ENCODE measurements at regions of chr9 and their contacts with region 1.

Region 1: GRCh38 chr9:78630966-78631365 is 334.0 kb downstream of the PSAT1 start:
- DNase-seq: no peak
- ATAC-seq: no peak
- H3K4me3 ChIP-seq: no peak overlapping the region
- H3K27ac ChIP-seq: no peak overlapping the region
- H3K4me1 ChIP-seq: no peaks in the 10 kb centered on the region
- H3K27me3 ChIP-seq: peaks cover 0 to 6% (median 3%) of the 10 kb centered on the region in 7 donors
- CTCF ChIP-seq: no peak

Region 2: DNA sequence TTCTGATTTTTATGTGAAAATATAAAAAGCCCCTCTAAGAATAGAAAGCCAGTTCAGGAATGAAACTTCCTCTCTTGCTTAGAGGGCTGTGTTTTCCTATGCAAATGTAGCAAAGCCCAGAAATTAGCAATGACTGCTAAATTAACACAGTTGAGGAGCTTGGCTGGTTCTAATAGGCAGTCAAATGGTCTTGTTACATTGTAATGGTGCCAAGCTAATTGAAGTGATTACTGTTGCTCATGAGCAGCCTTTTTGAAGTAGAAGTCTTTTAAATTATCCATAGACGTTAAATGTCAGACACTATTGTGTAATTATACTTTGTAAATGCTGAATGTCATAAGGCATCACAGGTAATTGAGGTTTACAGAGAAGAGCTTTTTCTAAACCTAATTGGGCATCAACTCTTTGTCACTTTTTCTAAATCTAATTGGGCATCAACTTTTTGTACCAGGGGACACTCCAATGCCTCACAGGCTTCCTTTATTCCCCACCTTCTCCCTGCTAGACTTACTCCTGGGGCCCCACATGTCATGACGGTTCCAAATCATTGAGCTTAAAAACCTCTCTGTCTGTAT is 104.9 kb before region 1 on chr9:
- intact Hi-C with region 1: no loop called
- DNase-seq: no peak
- ATAC-seq: no peak
- H3K4me3 ChIP-seq: no peak overlapping the region
- H3K27ac ChIP-seq: no peak overlapping the region
- H3K4me1 ChIP-seq: no peaks in the 10 kb centered on the region
- H3K27me3 ChIP-seq: no peaks in the 10 kb centered on the region
- CTCF ChIP-seq: no peak

Region 3: DNA sequence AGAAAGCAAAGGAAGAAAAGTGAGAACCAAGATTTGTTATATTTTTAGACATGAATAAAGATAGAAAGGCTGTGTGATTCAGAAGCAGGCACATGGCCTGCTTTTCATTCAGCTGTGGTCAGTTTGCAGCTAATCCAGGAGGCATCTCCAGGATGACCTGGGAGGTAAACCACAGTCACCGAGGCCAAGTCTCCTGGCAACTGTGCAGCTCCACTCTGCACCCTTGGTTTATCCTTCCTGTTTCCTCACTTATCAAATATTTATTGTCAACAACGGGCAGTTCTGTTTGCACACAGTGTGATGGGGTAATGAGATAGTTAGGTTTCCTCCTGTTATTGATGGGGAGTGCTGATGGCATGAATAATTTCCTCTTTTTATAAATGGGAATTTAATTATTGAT is 91.1 kb before region 1 on chr9:
- intact Hi-C with region 1: loop called in 1 of 10 experiments (anchors 10 kb)
- DNase-seq: no peak
- ATAC-seq: no peak
- H3K4me3 ChIP-seq: no peak overlapping the region
- H3K27ac ChIP-seq: no peak overlapping the region
- H3K4me1 ChIP-seq: no peaks in the 10 kb centered on the region
- H3K27me3 ChIP-seq: no peaks in the 10 kb centered on the region
- CTCF ChIP-seq: no peak

Region 4: GRCh38 chr9:78668148-78668825 is 37.3 kb after region 1 on chr9:
- intact Hi-C with region 1: no loop called
- DNase-seq: no peak
- ATAC-seq: no peak
- H3K4me3 ChIP-seq: no peak overlapping the region
- H3K27ac ChIP-seq: no peak overlapping the region
- H3K4me1 ChIP-seq: no peaks in the 10 kb centered on the region
- H3K27me3 ChIP-seq: peaks cover 0 to 4% (median 0%) of the 10 kb centered on the region in 7 donors
- CTCF ChIP-seq: no peak

Measured in heart right ventricle (tissue), 16 donors.